B cell (primary cell): ENCODE measurements at regions of chr22 and their contacts with region 1.

Region 1: GRCh38 chr22:17057959-17058814 is 26.6 kb upstream of the IL17RA start:
- DNase-seq: peak; percentile 61
- ATAC-seq: peak; percentile 72
- H3K4me3 ChIP-seq: no peak overlapping the region
- H3K4me3 Mint-ChIP-seq: no peak overlapping the region
- H3K27ac ChIP-seq: no peak overlapping the region
- H3K27ac Mint-ChIP-seq: no peak overlapping the region
- H3K4me1 ChIP-seq: peaks cover 0 to 3% of the 10 kb centered on the region in 2 donors
- H3K4me1 Mint-ChIP-seq: peaks cover 2% of the 10 kb centered on the region
- H3K27me3 ChIP-seq: no peaks in the 10 kb centered on the region
- H3K27me3 Mint-ChIP-seq: no peaks in the 10 kb centered on the region
- CTCF ChIP-seq: peak; percentile 94

Region 2: DNA sequence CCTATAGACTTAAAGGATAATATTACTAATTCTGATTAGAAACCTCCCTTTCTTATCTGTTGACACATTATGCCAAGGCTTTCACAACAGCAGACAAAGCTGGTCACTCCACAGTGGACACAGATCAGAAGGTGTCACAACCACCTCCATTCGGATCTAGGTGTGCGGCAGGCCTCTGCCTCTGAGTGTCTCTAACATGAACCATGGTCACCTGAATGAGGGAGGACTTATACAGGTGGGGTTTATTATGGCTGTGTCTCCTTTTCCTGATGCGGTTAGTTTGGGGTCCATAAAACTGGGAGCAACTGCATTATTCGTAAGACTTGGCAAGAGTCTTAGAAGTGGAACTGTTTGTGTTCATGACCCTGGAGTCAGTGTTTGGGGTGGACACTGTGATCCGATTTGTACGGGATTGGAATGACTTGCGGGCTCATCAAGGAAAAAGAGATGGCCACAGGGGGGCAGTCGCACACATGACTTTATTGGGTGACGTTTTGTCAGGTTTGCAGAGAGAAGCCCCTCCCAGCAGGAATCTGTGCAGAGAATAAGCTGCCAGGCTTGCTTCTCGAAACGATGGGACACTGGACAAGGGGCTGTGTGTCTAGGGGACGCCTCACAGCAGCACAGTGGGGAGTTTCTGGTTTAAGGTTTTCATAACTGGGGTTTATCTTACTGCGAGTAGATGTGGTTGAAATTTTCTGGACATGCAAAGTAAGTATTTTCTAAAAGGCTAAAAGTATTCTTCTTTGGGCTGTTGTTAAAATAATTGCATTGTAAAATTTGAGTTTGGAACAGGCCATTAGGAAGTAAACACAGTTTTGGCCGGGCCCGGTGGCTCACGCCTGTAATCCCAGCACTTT is 140.8 kb before region 1 on chr22:
- CTCF ChIA-PET with region 1: interaction called, 59 read pairs
- POLR2A ChIA-PET with region 1: no interaction called
- intact Hi-C with region 1: loop called (anchors 1 kb)
- DNase-seq: peak; percentile 61
- ATAC-seq: no peak
- H3K4me3 ChIP-seq: no peak overlapping the region
- H3K4me3 Mint-ChIP-seq: no peak overlapping the region
- H3K27ac ChIP-seq: no peak overlapping the region
- H3K27ac Mint-ChIP-seq: no peak overlapping the region
- H3K4me1 ChIP-seq: peaks cover 6 to 9% of the 10 kb centered on the region in 2 donors
- H3K4me1 Mint-ChIP-seq: peaks cover 21% of the 10 kb centered on the region
- H3K27me3 ChIP-seq: peaks cover 0 to 10% (median 2%) of the 10 kb centered on the region in 4 experiments
- H3K27me3 Mint-ChIP-seq: peaks cover 21% of the 10 kb centered on the region
- CTCF ChIP-seq: peak; percentile 73